Left lung (tissue), 14 donors: ENCODE measurements at regions of chr10 and their contacts with region 1.

Region 1: DNA sequence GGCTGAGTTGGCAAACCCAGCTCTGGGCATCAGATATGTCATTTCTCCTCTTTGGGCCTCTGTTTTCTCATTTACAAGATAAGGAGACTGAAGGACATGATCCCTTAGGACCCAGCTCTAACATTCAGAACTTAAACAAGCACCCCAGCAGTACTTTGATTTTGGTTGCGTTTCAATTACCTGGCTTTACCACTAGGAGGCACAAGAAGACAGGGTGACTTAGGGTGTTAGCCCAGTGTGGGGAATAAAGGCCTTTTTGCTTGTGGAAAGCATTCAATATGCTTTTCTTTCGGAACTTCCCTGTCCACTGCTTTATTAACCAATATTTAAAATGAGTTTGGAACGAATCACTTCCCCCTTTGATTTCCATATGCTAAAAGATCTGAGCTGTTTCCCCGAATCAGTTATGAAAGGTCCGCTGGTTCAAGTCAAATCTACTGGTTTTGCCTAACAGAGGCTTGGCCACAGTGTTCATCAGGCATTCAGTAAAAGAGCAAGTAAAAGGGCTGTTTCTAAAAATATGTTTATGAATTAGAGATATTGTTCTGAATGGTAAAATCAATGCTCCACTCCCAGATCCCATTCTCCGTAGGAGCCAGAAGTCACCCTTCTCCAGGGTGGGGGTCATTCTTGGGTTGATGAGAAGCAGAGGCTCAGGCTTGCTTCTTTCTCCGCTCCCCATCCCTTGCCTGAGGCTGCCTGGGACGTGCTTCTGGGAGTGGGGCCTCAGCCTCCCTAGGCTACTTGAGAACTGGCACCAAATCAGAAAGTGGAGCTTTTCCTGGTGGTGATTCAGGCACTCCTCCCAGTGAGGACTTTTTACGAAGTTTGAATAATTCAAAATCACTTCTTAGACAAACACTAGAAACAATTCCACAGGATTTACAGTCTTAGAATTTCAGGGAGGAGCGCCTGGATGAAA is 105.5 kb downstream of the MYOF start:
- DNase-seq: peak in 3 of 4 donors; percentile 50 to 88 (median 80)
- ATAC-seq: peak; percentile 94
- H3K4me3 ChIP-seq: no peak overlapping the region
- H3K27ac ChIP-seq: peak overlapping the region; percentile 55 to 81
- H3K4me1 ChIP-seq: peaks cover 0 to 36% of the 10 kb centered on the region in 2 donors
- H3K27me3 ChIP-seq: no peaks in the 10 kb centered on the region
- CTCF ChIP-seq: peak; percentile 79 to 91

Region 2: DNA sequence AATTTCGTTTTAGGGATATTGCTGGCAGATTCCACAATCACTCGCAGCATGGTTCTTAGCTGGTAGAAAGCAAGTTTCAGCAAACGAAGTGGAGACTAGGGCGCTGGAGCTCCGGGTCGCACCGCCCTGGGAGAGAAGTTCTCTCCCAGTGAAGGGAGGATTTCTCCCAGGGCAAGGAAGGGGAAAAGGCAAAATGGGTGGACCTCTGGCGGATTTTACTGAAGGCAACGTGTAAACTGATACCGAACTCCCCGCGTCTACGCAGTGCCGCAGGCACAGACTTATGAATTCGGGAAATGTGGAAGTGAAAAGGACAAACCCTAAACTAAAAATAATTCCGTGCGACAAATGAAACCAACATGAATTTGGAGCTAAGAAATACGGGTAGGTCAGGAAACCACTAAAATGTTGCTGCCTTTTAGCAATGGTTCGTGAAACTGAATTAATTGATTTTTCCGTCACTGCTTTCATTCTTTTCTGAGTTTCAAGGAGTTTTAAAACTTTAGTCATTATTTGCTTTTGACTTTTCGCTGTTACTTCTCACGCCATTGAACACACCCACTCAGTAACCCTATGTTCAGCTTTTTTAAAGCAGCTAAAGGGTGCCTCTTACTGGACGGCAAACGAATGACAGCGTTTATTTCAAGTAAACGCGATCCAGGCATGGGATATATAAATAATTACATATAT is 105.7 kb after region 1 on chr10 and contains the start of gene MYOF:
- intact Hi-C with region 1: loop called (anchors 5 to 10 kb)
- DNase-seq: peak; percentile 58 to 91 (median 80)
- ATAC-seq: peak; percentile 88
- H3K4me3 ChIP-seq: peak within 1 kb of the TSS; percentile 39 to 53
- H3K27ac ChIP-seq: peak within 1 kb of the TSS; percentile 89 to 96
- H3K4me1 ChIP-seq: peaks cover 0 to 19% of the 10 kb centered on the region in 2 donors
- H3K27me3 ChIP-seq: peaks cover 0 to 12% of the 10 kb centered on the region in 2 donors
- CTCF ChIP-seq: peak; percentile 25 to 44
- polyA plus RNA-seq, gene MYOF: 54.9 to 69.4 (median 61.5) TPM

Region 3: GRCh38 chr10:93806903-93807302 is 430.3 kb after region 1 on chr10:
- intact Hi-C with region 1: no loop called
- DNase-seq: no peak
- ATAC-seq: no peak
- H3K4me3 ChIP-seq: no peak overlapping the region
- H3K27ac ChIP-seq: no peak overlapping the region
- H3K4me1 ChIP-seq: no peaks in the 10 kb centered on the region
- H3K27me3 ChIP-seq: peaks cover 0 to under 1% of the 10 kb centered on the region in 2 donors
- CTCF ChIP-seq: no peak